ENCODE measurements at regions of chr7 and their contacts with region 1.

Region 1: DNA sequence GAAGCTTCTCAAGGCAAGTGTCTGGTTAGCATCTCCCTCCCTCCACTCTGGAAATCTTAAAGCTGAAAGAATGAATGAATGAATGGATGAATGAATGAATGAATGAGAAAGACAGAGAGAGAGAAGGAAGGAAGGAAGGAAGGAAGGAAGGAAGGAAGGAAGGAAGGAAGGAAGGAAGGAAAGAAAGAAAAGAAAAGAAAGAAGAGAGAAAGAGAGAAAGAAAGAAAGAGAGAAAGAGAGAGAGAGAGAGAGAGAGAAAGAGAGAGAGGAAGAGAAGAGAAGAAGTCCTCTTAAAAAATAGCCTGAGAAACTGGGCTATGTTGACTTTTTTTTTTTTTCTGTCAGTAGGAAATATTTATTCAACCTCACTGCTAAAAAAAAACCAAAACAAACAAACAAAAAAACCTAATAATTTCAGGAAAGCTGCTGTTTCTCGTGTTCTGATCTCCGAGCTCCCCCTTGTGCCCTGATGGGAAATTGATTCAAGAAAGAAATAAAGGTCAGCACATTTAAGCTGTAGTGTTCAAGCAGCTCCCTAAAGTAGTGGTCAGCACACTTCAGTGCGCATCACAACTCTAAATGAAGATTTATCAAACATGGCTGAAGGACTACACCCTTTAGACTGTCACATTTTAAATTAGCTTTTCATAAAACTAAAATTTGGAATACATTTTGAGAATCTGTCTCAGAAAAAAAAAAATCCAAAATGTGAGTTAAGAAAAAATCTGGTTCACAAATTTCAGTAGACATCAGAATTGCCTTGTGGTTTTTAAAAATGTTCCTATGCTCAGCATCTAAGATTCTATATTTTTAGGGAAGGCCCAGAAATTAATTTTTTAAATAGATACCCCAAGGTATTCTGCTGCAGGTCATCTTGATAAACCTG is 154.3 kb downstream of the ELAPOR2 start:
- DNase-seq: peak; percentile 12
- ATAC-seq: peak; percentile 84
- H3K4me3 Mint-ChIP-seq: no peak overlapping the region
- H3K27ac Mint-ChIP-seq: no peak overlapping the region
- H3K4me1 Mint-ChIP-seq: no peaks in the 10 kb centered on the region
- H3K27me3 Mint-ChIP-seq: no peaks in the 10 kb centered on the region
- CTCF ChIP-seq: no peak; the same call in 1 of the 2 replicates

Region 2: DNA sequence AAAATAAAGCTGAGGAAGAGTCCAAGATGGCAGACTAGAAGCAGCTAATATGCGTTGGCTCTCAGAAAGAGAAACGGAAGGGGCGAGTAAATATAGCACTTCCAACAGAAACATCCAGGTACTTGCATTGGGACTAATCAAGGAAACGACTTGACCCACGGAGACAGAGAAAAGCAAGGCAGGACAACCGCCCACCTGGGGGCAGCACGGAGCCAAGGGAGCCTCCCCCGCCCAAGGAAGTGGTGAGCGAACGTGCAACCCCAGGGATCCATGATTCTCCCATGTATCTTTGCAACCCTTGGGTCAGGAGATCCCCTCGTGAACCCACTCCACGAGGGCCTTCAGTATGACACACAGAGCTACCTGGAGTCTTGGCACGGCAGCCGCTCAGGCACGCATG is 306.9 kb before region 1 on chr7:
- CTCF ChIA-PET with region 1: interaction called, 22 read pairs
- POLR2A ChIA-PET with region 1: no interaction called
- DNase-seq: peak; percentile 86
- ATAC-seq: peak; percentile 90
- H3K4me3 Mint-ChIP-seq: no peak overlapping the region
- H3K27ac Mint-ChIP-seq: no peak overlapping the region
- H3K4me1 Mint-ChIP-seq: peaks cover 9% of the 10 kb centered on the region
- H3K27me3 Mint-ChIP-seq: no peaks in the 10 kb centered on the region; the same call in 1 of the 2 replicates
- CTCF ChIP-seq: peak; percentile 54; the same call in 1 of the 2 replicates

Region 3: DNA sequence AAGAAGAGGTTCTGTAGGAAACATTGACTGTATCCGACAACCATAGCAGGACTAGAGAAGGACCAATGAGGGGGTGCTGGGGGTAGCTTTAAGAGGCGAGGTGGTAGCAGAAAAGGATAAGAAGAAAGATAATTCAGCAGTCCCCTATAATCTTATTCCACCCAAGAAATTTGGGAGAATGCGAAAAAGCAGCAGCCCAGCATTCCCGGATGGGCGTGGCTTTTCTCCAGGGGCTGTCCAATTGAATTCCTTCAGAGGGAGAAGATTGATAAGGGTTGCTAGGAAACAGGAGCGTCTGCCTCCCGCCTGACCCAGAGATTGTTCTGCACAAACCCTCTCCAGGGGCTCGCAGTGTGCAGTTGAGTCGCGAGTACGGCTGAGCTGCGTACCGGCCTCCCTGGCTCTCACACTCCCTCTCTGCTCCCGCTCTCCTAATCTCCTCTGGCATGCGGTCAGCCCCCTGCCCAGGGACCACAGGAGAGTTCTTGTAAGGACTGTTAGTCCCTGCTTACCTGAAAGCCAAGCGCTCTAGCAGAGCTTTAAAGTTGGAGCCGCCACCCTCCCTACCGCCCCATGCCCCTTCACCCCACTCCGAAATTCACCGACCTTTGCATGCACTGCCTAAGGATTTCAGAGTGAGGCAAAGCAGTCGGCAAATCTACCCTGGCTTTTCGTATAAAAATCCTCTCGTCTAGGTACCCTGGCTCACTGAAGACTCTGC is 261.5 kb before region 1 on chr7 and contains the start of gene GRM3:
- CTCF ChIA-PET with region 1: interaction called, 11 read pairs
- POLR2A ChIA-PET with region 1: no interaction called
- DNase-seq: peak; percentile 74
- ATAC-seq: peak; percentile 81
- H3K4me3 Mint-ChIP-seq: peak within 1 kb of the TSS; percentile 84
- H3K27ac Mint-ChIP-seq: no peak within 1 kb of the TSS
- H3K4me1 Mint-ChIP-seq: peaks cover 22% of the 10 kb centered on the region
- H3K27me3 Mint-ChIP-seq: peaks cover 26% of the 10 kb centered on the region
- CTCF ChIP-seq: no peak
- total RNA-seq, gene GRM3: 0.87 to 1.5 TPM (median 0.94 TPM) in 3 replicates

Region 4: GRCh38 chr7:86667732-86668131 is 237.5 kb before region 1 on chr7:
- CTCF ChIA-PET with region 1: interaction called, 37 read pairs
- POLR2A ChIA-PET with region 1: no interaction called
- DNase-seq: peak; percentile 22
- ATAC-seq: peak; percentile 93
- H3K4me3 Mint-ChIP-seq: no peak overlapping the region
- H3K27ac Mint-ChIP-seq: no peak overlapping the region
- H3K4me1 Mint-ChIP-seq: peaks cover 20% of the 10 kb centered on the region
- H3K27me3 Mint-ChIP-seq: no peaks in the 10 kb centered on the region
- CTCF ChIP-seq: no peak

Region 5: GRCh38 chr7:86814661-86815379 is 90.4 kb before region 1 on chr7:
- CTCF ChIA-PET with region 1: interaction called, 10 read pairs
- POLR2A ChIA-PET with region 1: no interaction called
- DNase-seq: peak; percentile 22
- ATAC-seq: peak; percentile 76
- H3K4me3 Mint-ChIP-seq: no peak overlapping the region
- H3K27ac Mint-ChIP-seq: no peak overlapping the region
- H3K4me1 Mint-ChIP-seq: no peaks in the 10 kb centered on the region
- H3K27me3 Mint-ChIP-seq: no peaks in the 10 kb centered on the region
- CTCF ChIP-seq: peak; percentile 40

Region 6: GRCh38 chr7:86889501-86889900 is 15.7 kb before region 1 on chr7:
- CTCF ChIA-PET with region 1: interaction called, 10 read pairs
- POLR2A ChIA-PET with region 1: no interaction called
- DNase-seq: no peak
- ATAC-seq: no peak
- H3K4me3 Mint-ChIP-seq: no peak overlapping the region
- H3K27ac Mint-ChIP-seq: no peak overlapping the region
- H3K4me1 Mint-ChIP-seq: no peaks in the 10 kb centered on the region
- H3K27me3 Mint-ChIP-seq: no peaks in the 10 kb centered on the region
- CTCF ChIP-seq: no peak

Region 7: GRCh38 chr7:87152107-87152844 is 247.1 kb after region 1 on chr7 and contains the start of gene DMTF1:
- CTCF ChIA-PET with region 1: interaction called, 15 read pairs
- POLR2A ChIA-PET with region 1: no interaction called
- DNase-seq: peak; percentile 92
- ATAC-seq: peak; percentile 89
- H3K4me3 Mint-ChIP-seq: peak within 1 kb of the TSS; percentile 94
- H3K27ac Mint-ChIP-seq: peak within 1 kb of the TSS; percentile 99
- H3K4me1 Mint-ChIP-seq: peaks cover 49% of the 10 kb centered on the region
- H3K27me3 Mint-ChIP-seq: no peaks in the 10 kb centered on the region
- CTCF ChIP-seq: no peak
- total RNA-seq, gene DMTF1: 79.3 to 87.9 TPM (median 86.8 TPM) in 3 replicates